Left ventricle myocardium inferior (tissue), 1 donor: ENCODE measurements at regions of chr17 and their contacts with region 1.

Region 1: GRCh38 chr17:35170968-35171771 is 23.0 kb downstream of the SLC35G3 start:
- DNase-seq: no peak
- H3K4me3 ChIP-seq: no peak overlapping the region
- H3K27ac ChIP-seq: no peak overlapping the region
- H3K4me1 ChIP-seq: peaks cover 10% of the 10 kb centered on the region
- H3K27me3 ChIP-seq: no peaks in the 10 kb centered on the region
- CTCF ChIP-seq: peak; percentile 42

Region 2: GRCh38 chr17:35537601-35538141 is 366.5 kb after region 1 on chr17 and contains the start of gene SLFN12L:
- intact Hi-C with region 1: loop called (anchors 10 kb)
- DNase-seq: no peak
- H3K4me3 ChIP-seq: no peak within 1 kb of the TSS
- H3K27ac ChIP-seq: peak within 1 kb of the TSS; percentile 68
- H3K4me1 ChIP-seq: peaks cover 34% of the 10 kb centered on the region
- H3K27me3 ChIP-seq: no peaks in the 10 kb centered on the region
- CTCF ChIP-seq: no peak
- total RNA-seq, gene SLFN12L: 0.25 TPM